ENCODE measurements at regions of chr1 and their contacts with region 1.

Region 1: DNA sequence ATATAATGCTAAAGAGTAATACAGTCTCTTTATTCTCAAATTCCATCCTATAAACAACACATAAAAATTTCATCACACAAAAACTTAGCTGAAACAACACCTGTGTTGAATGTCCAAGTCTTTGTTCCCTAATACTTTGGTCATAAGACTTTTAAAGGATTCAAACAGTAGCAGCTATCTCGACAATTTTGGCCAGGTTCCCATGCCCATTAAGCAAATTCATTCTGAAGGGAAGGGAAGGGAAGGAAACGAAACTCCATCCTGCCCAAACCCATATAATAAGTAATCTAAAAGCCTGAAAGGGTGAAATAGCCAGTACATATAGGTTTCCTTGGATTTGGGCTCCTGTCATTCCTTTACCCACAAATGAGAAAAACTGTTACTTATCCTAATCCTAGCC is 7.5 kb downstream of the IVNS1ABP start:
- DNase-seq: no peak
- ATAC-seq: no peak
- H3K4me3 Mint-ChIP-seq: no peak overlapping the region
- H3K27ac Mint-ChIP-seq: no peak overlapping the region
- H3K4me1 Mint-ChIP-seq: peaks cover 36% of the 10 kb centered on the region
- H3K27me3 Mint-ChIP-seq: no peaks in the 10 kb centered on the region
- CTCF ChIP-seq: no peak

Region 2: GRCh38 chr1:184945029-184945428 is 364.5 kb before region 1 on chr1:
- CTCF ChIA-PET with region 1: no interaction called
- POLR2A ChIA-PET with region 1: no interaction called
- intact Hi-C with region 1: no loop called
- DNase-seq: no peak
- ATAC-seq: peak; percentile 62
- H3K4me3 Mint-ChIP-seq: no peak overlapping the region
- H3K27ac Mint-ChIP-seq: no peak overlapping the region
- H3K4me1 Mint-ChIP-seq: peaks cover 50% of the 10 kb centered on the region
- H3K27me3 Mint-ChIP-seq: no peaks in the 10 kb centered on the region
- CTCF ChIP-seq: no peak

Region 3: DNA sequence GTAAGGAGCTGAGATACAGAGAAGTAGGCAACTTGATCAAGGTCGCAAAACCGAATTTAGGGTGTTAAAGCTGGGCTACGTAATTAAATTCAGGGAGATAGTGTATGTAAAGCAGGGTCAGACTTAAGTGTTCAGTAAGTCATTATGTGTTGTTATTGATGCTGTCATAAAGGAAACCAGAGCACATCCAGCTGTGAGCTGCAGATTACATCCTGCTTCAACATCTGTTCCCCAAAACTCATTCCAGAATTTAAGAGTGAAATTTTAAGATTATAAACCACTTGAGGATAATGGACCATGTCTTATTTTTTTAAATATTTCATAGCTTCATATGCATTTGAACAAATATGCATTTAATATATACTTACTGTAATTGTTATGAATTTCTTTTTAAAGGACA is 42.3 kb before region 1 on chr1:
- CTCF ChIA-PET with region 1: no interaction called
- POLR2A ChIA-PET with region 1: no interaction called
- intact Hi-C with region 1: no loop called
- DNase-seq: no peak
- ATAC-seq: no peak
- H3K4me3 Mint-ChIP-seq: no peak overlapping the region
- H3K27ac Mint-ChIP-seq: no peak overlapping the region
- H3K4me1 Mint-ChIP-seq: no peaks in the 10 kb centered on the region
- H3K27me3 Mint-ChIP-seq: no peaks in the 10 kb centered on the region
- CTCF ChIP-seq: no peak

Region 4: GRCh38 chr1:185325413-185325812 is 15.8 kb after region 1 on chr1:
- CTCF ChIA-PET with region 1: no interaction called
- POLR2A ChIA-PET with region 1: no interaction called
- intact Hi-C with region 1: no loop called
- DNase-seq: no peak
- ATAC-seq: no peak
- H3K4me3 Mint-ChIP-seq: no peak overlapping the region
- H3K27ac Mint-ChIP-seq: no peak overlapping the region
- H3K4me1 Mint-ChIP-seq: no peaks in the 10 kb centered on the region
- H3K27me3 Mint-ChIP-seq: no peaks in the 10 kb centered on the region
- CTCF ChIP-seq: no peak

Region 5: DNA sequence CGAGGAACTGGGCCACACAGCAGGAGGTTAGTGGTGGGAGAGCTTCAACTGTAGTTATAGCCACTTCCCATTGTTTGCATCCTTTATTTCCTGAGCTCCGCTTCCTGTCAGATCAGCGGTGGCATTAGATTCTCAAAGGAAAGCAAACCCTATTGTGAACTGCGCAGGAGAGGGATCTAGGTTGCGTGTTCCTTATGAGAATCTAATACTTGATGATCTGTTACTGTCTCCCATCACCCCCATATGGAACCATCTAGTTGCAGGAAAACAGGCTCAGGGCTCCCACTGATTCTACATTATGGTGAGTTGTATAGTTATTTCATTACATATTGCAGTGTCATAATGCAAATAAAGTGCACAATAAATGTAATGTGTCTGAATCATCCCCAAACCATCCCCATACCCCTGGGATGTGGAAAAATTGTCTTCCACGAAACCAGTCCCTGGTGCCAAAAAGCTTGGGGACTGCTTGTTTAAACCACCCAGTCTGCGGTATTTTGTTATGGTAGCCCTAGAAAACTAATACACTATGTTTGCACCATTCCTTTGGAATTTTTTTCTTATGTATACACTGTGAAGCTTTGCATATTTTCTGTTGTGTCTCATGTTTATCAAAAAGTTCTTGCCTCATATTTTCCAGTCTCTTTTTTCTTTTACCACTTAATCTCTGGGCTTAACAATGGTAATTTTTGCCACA is 144.1 kb after region 1 on chr1:
- CTCF ChIA-PET with region 1: no interaction called
- POLR2A ChIA-PET with region 1: no interaction called
- intact Hi-C with region 1: no loop called
- DNase-seq: no peak
- ATAC-seq: no peak
- H3K4me3 Mint-ChIP-seq: no peak overlapping the region
- H3K27ac Mint-ChIP-seq: no peak overlapping the region
- H3K4me1 Mint-ChIP-seq: no peaks in the 10 kb centered on the region
- H3K27me3 Mint-ChIP-seq: no peaks in the 10 kb centered on the region
- CTCF ChIP-seq: no peak

Region 6: GRCh38 chr1:186330758-186331157 is 1021.2 kb after region 1 on chr1:
- CTCF ChIA-PET with region 1: no interaction called
- POLR2A ChIA-PET with region 1: no interaction called
- intact Hi-C with region 1: loop called (anchors 10 kb)
- DNase-seq: no peak
- ATAC-seq: no peak
- H3K4me3 Mint-ChIP-seq: no peak overlapping the region
- H3K27ac Mint-ChIP-seq: no peak overlapping the region
- H3K4me1 Mint-ChIP-seq: no peaks in the 10 kb centered on the region
- H3K27me3 Mint-ChIP-seq: no peaks in the 10 kb centered on the region
- CTCF ChIP-seq: no peak

Measured in activated B cell treated with CpG ODN at 0.5 μM for 24 hours (primary cell).